Right ventricle myocardium inferior (tissue), 1 donor: ENCODE measurements at regions of chrX and their contacts with region 1.

Region 1: GRCh38 chrX:49043220-49043986 is at the start of gene TFE3:
- DNase-seq: peak; percentile 99
- ATAC-seq: peak; percentile 94
- total RNA-seq, gene TFE3: 24.8 TPM

Region 2: DNA sequence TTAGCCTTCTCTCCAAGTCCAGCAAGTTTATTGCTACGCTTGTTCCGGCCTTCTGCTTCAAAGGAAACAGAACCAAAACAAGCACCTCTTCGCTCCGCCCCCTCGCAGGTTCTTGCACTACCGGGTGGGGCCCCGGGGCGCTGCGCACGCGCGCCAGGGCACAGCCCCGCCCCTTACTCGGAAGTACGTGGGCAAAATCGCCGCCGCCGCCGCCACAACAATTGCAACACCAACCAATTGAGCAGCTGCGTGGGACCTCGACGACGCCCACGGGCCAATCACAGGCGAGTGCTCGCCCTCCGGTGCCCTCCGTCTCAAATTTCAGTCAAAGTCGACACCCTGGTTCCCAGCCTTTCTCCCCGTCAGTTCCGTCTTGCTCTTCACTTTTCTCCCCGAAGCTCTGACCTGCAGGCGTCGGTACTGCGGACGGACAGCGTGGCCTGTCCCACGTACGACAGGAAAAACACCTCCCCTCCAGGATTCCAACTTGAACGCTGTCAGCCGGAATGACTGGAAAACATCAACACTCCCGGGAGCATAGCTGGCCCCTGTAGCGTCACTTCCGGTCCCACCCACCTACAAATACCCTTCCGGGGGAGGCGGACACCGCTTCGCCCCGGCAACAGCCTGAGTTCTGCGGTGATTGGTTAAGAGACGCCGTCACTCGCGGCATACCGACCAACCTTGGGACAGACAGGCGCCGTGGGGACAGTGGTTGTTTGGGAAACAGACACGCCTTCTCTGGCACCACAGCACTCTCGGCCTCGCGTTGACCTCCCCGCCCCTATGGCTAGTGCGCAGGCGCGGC is 85.4 kb before region 1 on chrX:
- intact Hi-C with region 1: loop called (anchors 5 kb)
- DNase-seq: peak; percentile 98
- ATAC-seq: peak; percentile 96

Region 3: GRCh38 chrX:48989483-48989882 is 53.9 kb before region 1 on chrX:
- intact Hi-C with region 1: loop called (anchors 10 kb)
- DNase-seq: no peak
- ATAC-seq: no peak

Region 4: GRCh38 chrX:49002091-49002935 is 41.1 kb before region 1 on chrX and contains the start of gene GRIPAP1:
- intact Hi-C with region 1: loop called (anchors 5 kb)
- DNase-seq: peak; percentile 83
- ATAC-seq: peak; percentile 93
- total RNA-seq, gene GRIPAP1: 20.1 TPM